AG04450 (cell line): ENCODE measurements at regions of chr9 and their contacts with region 1.

Region 1: DNA sequence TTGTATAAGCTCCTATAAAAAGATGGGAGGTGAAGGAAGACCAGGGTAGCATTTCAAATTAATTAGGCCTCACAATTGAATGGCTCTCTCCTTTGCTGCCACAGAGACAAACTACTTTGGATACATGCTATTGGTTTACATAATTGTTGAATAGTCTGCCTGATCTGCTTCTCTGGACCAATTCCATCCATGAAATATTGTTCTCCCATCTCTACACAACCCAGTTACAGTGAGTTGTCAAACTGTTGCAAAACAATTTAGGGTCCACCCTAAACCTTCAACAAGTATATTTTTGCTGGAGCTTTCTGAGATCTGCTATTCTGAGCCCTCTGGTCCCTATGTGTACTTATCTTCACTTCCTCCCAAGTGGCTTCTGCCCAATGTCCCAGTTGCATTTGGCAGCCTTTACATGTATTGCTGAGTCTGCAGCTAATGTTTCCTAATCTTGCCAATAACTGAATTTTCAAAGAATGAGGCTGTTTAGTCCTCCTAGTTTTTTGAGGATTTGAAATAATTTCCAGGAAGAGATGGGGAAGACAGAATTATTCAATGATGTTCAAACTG is 38.9 kb downstream of the AGTPBP1 start:
- DNase-seq: no peak
- H3K4me3 ChIP-seq: no peak overlapping the region
- H3K27ac ChIP-seq: no peak overlapping the region
- H3K27me3 ChIP-seq: no peaks in the 10 kb centered on the region
- CTCF ChIP-seq: no peak

Region 2: DNA sequence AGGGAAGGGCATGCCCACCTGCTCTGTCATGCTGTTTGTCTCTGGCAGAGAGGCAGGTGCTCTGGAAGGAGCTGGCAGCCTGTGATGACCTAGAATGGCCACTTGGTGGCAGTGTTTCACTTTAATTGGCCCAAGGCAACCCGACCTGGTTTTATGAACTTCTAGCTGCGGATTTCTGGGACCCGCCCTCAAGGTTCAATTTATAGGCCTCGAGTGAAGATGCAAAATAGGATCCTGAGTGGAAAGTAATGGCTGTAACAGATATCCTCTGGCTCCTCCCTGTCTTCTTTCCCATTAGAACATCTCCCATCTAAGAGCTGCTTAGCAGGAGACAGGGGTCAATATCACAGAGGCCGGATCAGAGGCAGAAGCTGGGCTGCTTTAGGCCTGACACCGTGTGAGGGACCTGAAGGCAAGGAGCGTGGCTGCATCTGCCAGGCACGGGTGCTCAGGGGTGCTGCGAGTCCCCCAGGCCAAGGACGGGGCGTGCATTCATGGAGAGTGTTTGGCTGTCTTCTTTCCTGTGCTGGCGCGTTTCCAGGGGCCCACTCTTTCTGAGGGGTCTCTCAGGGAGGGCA is 1305.6 kb before region 1 on chr9:
- CTCF ChIA-PET with region 1: interaction called, 11 read pairs
- POLR2A ChIA-PET with region 1: no interaction called
- DNase-seq: peak; percentile 38
- H3K4me3 ChIP-seq: no peak overlapping the region
- H3K27ac ChIP-seq: no peak overlapping the region
- H3K27me3 ChIP-seq: no peaks in the 10 kb centered on the region
- CTCF ChIP-seq: peak; percentile 90

Region 3: GRCh38 chr9:85401998-85402397 is 300.8 kb before region 1 on chr9:
- CTCF ChIA-PET with region 1: no interaction called
- POLR2A ChIA-PET with region 1: no interaction called
- DNase-seq: no peak
- H3K4me3 ChIP-seq: no peak overlapping the region
- H3K27ac ChIP-seq: no peak overlapping the region
- H3K27me3 ChIP-seq: no peaks in the 10 kb centered on the region
- CTCF ChIP-seq: no peak

Region 4: DNA sequence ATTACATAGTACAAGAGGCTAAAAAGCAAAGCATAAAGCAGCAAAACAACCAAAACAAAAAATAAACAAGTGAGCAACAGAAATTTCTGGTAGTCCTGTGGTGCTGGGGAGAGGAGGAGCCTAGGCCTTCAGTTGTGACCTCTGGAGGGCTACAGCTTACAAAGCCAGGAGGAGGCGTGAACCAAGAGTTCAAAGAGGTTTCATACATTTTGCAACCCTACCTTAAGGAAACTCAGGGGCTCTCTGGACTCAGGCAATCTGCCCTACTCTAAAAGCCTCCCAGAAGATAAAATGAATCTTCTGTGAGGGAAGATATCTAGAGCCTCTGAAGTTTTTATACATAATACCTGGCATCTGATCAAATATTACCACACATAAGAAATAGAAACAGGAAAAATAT is 148.5 kb before region 1 on chr9:
- CTCF ChIA-PET with region 1: interaction called, 10 read pairs
- POLR2A ChIA-PET with region 1: no interaction called
- DNase-seq: no peak
- H3K4me3 ChIP-seq: no peak overlapping the region
- H3K27ac ChIP-seq: no peak overlapping the region
- H3K27me3 ChIP-seq: no peaks in the 10 kb centered on the region
- CTCF ChIP-seq: no peak

Region 5: DNA sequence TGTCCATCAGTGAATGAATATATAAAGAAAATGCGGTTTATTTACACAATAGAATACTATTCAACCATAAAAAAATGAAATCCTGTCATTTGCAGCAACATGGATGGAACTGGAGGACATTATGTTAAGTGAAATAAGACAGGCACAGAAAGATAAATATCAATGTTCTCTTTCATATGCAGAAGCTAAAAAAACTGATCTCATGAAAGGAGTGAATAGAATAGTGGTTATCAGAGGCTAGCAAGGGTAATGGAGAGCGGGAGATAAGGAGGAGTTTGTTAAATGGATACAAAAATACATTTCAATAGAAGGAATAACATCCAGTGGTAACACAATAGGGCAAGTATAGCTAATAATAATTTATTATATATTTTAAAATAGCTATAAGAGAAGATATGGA is 26.0 kb before region 1 on chr9:
- CTCF ChIA-PET with region 1: interaction called, 11 read pairs
- POLR2A ChIA-PET with region 1: no interaction called
- DNase-seq: no peak
- H3K4me3 ChIP-seq: no peak overlapping the region
- H3K27ac ChIP-seq: no peak overlapping the region
- H3K27me3 ChIP-seq: no peaks in the 10 kb centered on the region
- CTCF ChIP-seq: no peak

Region 6: DNA sequence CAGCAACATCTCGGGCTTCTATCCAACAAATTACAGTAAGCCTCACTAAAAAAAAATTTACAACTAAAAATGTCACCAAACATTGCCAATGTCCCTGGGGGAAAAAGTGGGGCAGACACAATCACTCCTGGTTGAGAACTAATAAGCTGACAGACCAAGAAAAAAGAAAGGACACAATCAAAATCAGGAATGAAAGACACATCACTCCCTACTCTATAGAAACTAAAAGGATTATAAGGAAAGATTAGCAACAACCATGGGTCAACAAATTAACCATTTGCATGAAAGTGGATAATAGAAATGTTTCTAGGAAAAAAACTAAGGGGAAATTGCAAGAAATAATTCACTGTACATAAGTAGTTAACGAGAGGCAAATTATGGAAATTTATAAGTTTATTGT is 14.4 kb before region 1 on chr9:
- CTCF ChIA-PET with region 1: interaction called, 31 read pairs
- POLR2A ChIA-PET with region 1: no interaction called
- DNase-seq: no peak
- H3K4me3 ChIP-seq: no peak overlapping the region
- H3K27ac ChIP-seq: no peak overlapping the region
- H3K27me3 ChIP-seq: no peaks in the 10 kb centered on the region
- CTCF ChIP-seq: no peak

Region 7: DNA sequence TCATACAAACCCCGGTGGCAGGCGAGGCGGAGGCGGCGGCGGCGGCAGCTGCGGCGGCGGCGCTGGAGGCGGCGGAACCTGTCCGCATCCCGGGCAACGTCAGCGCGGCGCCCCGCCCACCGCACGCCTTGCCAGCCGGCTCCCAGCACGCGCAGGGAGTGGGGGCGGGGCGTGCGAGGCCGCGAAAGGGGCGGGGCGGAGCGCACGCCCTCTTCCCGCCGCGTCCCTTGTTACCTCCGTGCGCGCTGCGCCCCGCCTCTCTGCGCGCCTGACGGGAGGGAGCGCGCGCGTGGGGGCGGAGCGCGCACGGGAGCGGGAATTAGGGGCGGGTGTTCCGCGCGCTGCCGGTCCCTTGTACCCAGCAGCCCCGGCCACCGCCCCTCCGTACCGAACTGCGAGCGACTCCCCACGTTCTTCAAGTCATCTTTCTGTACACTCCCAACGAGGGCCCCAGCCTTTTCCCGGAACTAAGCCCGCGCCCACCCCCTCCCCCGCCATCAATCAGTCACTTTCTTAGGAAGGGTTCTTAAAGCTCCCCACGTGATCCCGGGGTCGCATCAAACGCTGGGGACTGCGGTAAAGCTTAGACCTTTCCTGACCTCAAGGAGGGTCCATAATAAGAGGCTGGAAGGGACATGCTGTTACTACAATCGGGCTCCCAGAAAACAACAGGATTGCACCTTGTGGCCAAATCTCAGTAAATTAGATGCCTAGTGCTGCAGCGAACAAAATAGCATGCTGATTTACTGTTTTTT is 39.2 kb after region 1 on chr9 and contains the start of gene AGTPBP1:
- CTCF ChIA-PET with region 1: interaction called, 24 read pairs
- POLR2A ChIA-PET with region 1: no interaction called
- DNase-seq: peak; percentile 66
- H3K4me3 ChIP-seq: peak within 1 kb of the TSS; percentile 79
- H3K27ac ChIP-seq: peak within 1 kb of the TSS; percentile 53
- H3K27me3 ChIP-seq: peaks cover 25% of the 10 kb centered on the region
- CTCF ChIP-seq: no peak
- polyA plus RNA-seq, gene AGTPBP1: 3.4 and 4.4 TPM in 2 replicates